Activated CD8-positive, alpha-beta T cell treated with anti-CD3 and anti-CD28 coated beads, Interleukin-2, amount 10 ng/mL, durations not matched to agents 7 days and 5 days (primary cell): ENCODE measurements at regions of chr1 and their contacts with region 1.

Region 1: GRCh38 chr1:244801246-244801645 is 34.2 kb upstream of the COX20 start:
- DNase-seq: peak; percentile 65
- ATAC-seq: peak; percentile 78
- H3K4me3 Mint-ChIP-seq: no peak overlapping the region
- H3K27ac Mint-ChIP-seq: no peak overlapping the region
- H3K4me1 Mint-ChIP-seq: peaks cover 5% of the 10 kb centered on the region
- H3K27me3 Mint-ChIP-seq: peaks cover 5% of the 10 kb centered on the region

Region 2: DNA sequence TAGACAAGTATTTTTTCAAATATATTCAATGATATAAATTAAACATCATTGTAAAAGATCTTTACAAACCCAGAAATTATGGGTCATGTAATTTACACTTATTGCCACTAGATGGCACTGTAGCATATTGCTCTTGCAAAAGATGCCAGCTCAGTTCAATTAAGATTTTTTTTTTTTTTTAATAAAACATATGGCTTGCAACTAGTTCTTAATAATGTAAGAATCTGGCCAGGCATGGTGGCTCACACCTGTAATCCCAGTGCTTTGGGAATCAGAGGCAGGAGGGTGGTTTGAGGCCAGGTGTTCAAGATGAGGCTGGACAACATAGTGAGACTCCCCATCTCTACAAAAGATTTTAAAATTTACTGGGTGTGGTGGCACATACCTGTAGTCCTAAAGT is 197.7 kb before region 1 on chr1:
- CTCF ChIA-PET with region 1: interaction called, 80 read pairs
- POLR2A ChIA-PET with region 1: no interaction called
- DNase-seq: no peak
- ATAC-seq: no peak
- H3K4me3 Mint-ChIP-seq: no peak overlapping the region
- H3K27ac Mint-ChIP-seq: no peak overlapping the region
- H3K4me1 Mint-ChIP-seq: no peaks in the 10 kb centered on the region
- H3K27me3 Mint-ChIP-seq: no peaks in the 10 kb centered on the region

Region 3: GRCh38 chr1:244705261-244706234 is 95.7 kb before region 1 on chr1:
- CTCF ChIA-PET with region 1: no interaction called
- POLR2A ChIA-PET with region 1: no interaction called
- DNase-seq: no peak
- ATAC-seq: no peak
- H3K4me3 Mint-ChIP-seq: no peak overlapping the region
- H3K27ac Mint-ChIP-seq: no peak overlapping the region
- H3K4me1 Mint-ChIP-seq: no peaks in the 10 kb centered on the region
- H3K27me3 Mint-ChIP-seq: no peaks in the 10 kb centered on the region

Region 4: DNA sequence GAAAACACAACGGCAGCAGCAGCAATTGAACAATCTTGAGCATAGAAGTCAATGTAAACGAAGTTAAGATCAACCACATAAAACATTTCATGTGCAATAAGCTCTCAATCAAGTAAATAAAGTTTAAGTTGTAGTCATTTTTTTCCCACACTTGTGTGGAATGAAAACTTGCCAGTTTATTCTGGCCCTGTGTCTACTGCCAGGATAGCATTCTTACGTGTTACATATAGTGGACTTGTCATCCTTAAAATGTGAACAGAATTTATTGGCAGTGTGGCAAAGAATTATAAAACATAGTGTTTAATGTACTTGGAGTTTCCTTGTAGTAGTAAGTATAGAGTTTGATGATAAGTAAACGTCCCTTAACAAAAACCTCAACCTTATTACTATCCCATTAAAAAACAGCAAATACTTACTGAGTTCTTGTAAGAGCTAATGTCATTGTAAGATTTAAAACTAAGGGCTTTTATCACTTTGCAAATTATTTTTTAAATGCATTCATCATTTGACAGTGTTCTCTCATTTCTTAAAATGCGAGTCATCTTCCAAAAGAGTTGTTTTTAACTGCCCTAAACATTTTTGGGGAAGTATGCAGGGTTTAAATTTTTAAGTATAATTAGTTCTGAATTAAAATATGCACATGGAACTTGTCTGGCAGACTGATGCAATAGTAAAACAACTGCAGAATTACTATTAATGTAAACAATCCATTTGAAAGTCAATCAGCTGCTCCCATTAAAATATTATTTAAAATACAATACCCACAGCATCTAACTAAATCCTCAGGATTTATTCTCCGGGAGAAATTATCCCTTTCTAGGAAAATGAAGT is 42.1 kb after region 1 on chr1:
- CTCF ChIA-PET with region 1: no interaction called
- POLR2A ChIA-PET with region 1: no interaction called
- DNase-seq: no peak
- ATAC-seq: no peak
- H3K4me3 Mint-ChIP-seq: no peak overlapping the region
- H3K27ac Mint-ChIP-seq: no peak overlapping the region
- H3K4me1 Mint-ChIP-seq: peaks cover 70% of the 10 kb centered on the region
- H3K27me3 Mint-ChIP-seq: no peaks in the 10 kb centered on the region

Region 5: GRCh38 chr1:244854865-244855578 is 53.8 kb after region 1 on chr1:
- CTCF ChIA-PET with region 1: interaction called, 11 read pairs
- POLR2A ChIA-PET with region 1: no interaction called
- DNase-seq: no peak
- ATAC-seq: peak; percentile 62
- H3K4me3 Mint-ChIP-seq: peak overlapping the region; percentile 48
- H3K27ac Mint-ChIP-seq: peak overlapping the region; percentile 72
- H3K4me1 Mint-ChIP-seq: peaks cover 83% of the 10 kb centered on the region
- H3K27me3 Mint-ChIP-seq: no peaks in the 10 kb centered on the region

Region 6: GRCh38 chr1:245036102-245036501 is 234.9 kb after region 1 on chr1:
- CTCF ChIA-PET with region 1: interaction called, 102 read pairs
- POLR2A ChIA-PET with region 1: no interaction called
- DNase-seq: no peak
- ATAC-seq: no peak
- H3K4me3 Mint-ChIP-seq: no peak overlapping the region
- H3K27ac Mint-ChIP-seq: no peak overlapping the region
- H3K4me1 Mint-ChIP-seq: no peaks in the 10 kb centered on the region
- H3K27me3 Mint-ChIP-seq: peaks cover 6% of the 10 kb centered on the region

Region 7: GRCh38 chr1:245051349-245052221 is 250.3 kb after region 1 on chr1:
- CTCF ChIA-PET with region 1: interaction called, 14 read pairs
- POLR2A ChIA-PET with region 1: no interaction called
- DNase-seq: peak; percentile 29
- ATAC-seq: peak; percentile 67
- H3K4me3 Mint-ChIP-seq: peak overlapping the region; percentile 9
- H3K27ac Mint-ChIP-seq: no peak overlapping the region
- H3K4me1 Mint-ChIP-seq: peaks cover 20% of the 10 kb centered on the region
- H3K27me3 Mint-ChIP-seq: peaks cover 8% of the 10 kb centered on the region